Activated CD4-positive, alpha-beta memory T cell treated with anti-CD3 and anti-CD28 coated beads, Interleukin-2, amount 10 ng/mL, durations not matched to agents 7 days and 5 days (primary cell): ENCODE measurements at regions of chr6 and their contacts with region 1.

Region 1: DNA sequence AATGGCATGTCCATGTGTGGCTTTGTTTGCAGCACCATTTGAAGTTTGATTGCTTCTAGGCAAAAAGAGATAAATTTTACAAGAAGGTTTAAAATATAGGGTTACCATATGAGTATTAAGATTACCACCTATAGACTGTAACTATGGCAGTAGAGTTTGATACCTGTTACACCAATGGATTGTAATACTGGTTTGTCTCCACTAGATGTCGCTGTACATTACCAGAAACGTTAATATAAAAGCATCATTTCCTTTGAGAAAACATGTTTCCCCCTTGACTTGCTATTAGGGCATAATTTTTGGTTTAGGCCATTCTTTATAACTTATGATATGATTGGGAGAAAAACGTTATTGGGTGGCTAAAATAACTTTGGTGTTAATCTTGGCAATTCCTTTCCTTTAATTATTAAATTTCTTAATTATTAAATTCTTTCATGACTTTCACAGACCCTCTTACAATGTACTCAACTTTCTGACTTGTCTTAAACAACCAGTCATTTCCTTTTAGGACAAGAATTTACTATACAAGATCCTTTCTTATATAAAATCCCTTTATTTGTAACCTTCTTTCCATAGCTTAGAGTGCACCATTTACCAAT is 42.8 kb downstream of the HLA-DPB1 start:
- DNase-seq: no peak
- H3K4me3 Mint-ChIP-seq: no peak overlapping the region
- H3K27ac Mint-ChIP-seq: no peak overlapping the region
- H3K4me1 Mint-ChIP-seq: peaks cover 10% of the 10 kb centered on the region
- H3K27me3 Mint-ChIP-seq: peaks cover 70% of the 10 kb centered on the region

Region 2: DNA sequence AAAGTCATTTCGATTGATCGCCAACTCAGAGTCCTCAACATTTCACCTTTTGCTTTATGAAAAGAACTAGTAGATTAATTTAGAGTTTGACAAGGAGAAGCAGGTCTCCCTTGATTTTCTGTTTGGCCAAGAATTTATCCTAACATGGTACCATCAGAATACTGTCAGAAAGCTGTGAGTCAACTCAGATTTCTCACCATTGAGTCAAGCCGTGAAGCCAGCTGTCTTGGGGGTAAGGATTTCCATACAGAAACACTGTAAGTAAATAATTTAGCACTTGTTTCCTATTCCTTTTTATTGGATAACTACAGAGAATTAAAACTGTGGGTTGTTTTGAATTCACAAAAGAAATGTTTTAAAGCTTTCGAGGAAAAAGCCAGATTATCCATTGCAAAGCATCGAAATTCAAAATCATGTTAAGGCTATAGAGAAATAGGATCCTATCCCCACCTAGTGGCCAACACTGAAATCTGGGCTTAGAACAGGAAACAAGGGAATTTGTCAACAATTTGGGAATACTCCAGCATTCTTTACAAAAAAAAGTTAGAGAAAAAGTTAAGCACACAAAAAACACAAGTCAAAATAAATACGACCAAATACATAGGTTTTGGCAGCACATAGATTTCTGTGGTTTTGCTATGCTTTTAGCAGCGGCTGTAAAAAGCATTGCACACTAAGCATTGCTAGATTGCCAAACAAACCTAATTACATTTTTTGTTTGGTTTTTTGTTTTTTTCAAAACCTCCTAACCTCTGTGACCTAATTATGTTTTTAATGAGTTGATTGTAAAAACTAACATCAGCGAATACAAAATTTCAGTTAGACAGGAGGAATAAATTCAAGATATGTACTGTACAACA is 29.4 kb after region 1 on chr6:
- CTCF ChIA-PET with region 1: interaction called, 13 read pairs
- POLR2A ChIA-PET with region 1: no interaction called
- DNase-seq: no peak
- H3K4me3 Mint-ChIP-seq: no peak overlapping the region
- H3K27ac Mint-ChIP-seq: no peak overlapping the region
- H3K4me1 Mint-ChIP-seq: peaks cover 3% of the 10 kb centered on the region
- H3K27me3 Mint-ChIP-seq: peaks cover 40% of the 10 kb centered on the region